ENCODE measurements at regions of chr14 and their contacts with region 1.

Region 1: GRCh38 chr14:96100161-96101029 is 61.2 kb downstream of the C14orf132 start:
- DNase-seq: peak; percentile 92
- ATAC-seq: peak; percentile 73
- H3K4me3 Mint-ChIP-seq: no peak overlapping the region
- H3K27ac Mint-ChIP-seq: no peak overlapping the region
- H3K4me1 Mint-ChIP-seq: peaks cover 14% of the 10 kb centered on the region
- H3K27me3 Mint-ChIP-seq: no peaks in the 10 kb centered on the region
- CTCF ChIP-seq: peak; percentile 65

Region 2: GRCh38 chr14:95683793-95684192 is 416.6 kb before region 1 on chr14:
- CTCF ChIA-PET with region 1: interaction called, 11 read pairs
- POLR2A ChIA-PET with region 1: no interaction called
- DNase-seq: peak; percentile 75
- ATAC-seq: peak; percentile 83
- H3K4me3 Mint-ChIP-seq: no peak overlapping the region
- H3K27ac Mint-ChIP-seq: no peak overlapping the region
- H3K4me1 Mint-ChIP-seq: peaks cover 35% of the 10 kb centered on the region
- H3K27me3 Mint-ChIP-seq: peaks cover 12% of the 10 kb centered on the region
- CTCF ChIP-seq: peak; percentile 67; the same call in 1 of the 2 replicates

Region 3: DNA sequence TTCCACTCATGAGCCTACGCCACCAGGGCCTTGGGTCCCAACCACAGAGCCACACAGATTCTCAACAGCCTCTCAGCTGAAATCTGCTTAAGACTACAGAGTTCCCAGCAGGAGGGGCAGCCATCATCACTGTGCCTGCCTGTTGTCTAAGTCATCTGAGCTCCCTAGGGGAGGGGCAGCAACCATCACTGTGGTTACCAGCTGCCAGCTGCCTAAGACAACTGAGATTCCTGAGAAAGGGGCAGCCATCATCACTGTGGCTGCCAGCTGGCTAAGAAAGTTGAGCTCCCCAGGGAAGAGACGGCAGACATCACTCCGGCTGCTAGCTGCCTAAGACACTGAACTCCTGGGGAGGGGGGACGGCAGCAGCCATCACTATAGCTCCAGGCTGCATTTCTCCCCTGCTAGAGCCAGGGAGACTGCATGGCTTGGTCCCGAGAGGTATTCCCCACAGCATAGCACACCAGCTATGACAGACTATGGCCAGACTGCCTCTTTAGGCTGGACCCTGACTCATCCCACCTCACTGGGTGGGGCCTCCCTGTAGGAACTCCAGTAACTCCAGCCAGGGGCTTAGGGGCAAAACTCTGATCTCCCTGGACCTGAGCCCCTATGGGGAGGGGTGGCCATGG is 98.4 kb before region 1 on chr14:
- CTCF ChIA-PET with region 1: interaction called, 41 read pairs
- POLR2A ChIA-PET with region 1: no interaction called
- DNase-seq: no peak
- ATAC-seq: peak; percentile 48; the same call in 1 of the 2 replicates
- H3K4me3 Mint-ChIP-seq: no peak overlapping the region
- H3K27ac Mint-ChIP-seq: no peak overlapping the region
- H3K4me1 Mint-ChIP-seq: 0 out of 2 replicates have a peak, but pooled peaks cover 4% of the 10 kb centered on the region
- H3K27me3 Mint-ChIP-seq: peaks cover 30% of the 10 kb centered on the region
- CTCF ChIP-seq: no peak

Region 4: GRCh38 chr14:96051642-96052540 is 48.5 kb before region 1 on chr14:
- CTCF ChIA-PET with region 1: interaction called, 61 read pairs
- POLR2A ChIA-PET with region 1: no interaction called
- DNase-seq: peak; percentile 52
- ATAC-seq: peak; percentile 86
- H3K4me3 Mint-ChIP-seq: no peak overlapping the region
- H3K27ac Mint-ChIP-seq: no peak overlapping the region; the same call in 1 of the 2 replicates
- H3K4me1 Mint-ChIP-seq: peaks cover 7% of the 10 kb centered on the region
- H3K27me3 Mint-ChIP-seq: no peaks in the 10 kb centered on the region
- CTCF ChIP-seq: peak; percentile 46; the same call in 1 of the 2 replicates

Region 5: GRCh38 chr14:96119947-96120346 is 19.6 kb after region 1 on chr14:
- CTCF ChIA-PET with region 1: interaction called, 14 read pairs
- POLR2A ChIA-PET with region 1: no interaction called
- DNase-seq: no peak
- ATAC-seq: no peak
- H3K4me3 Mint-ChIP-seq: no peak overlapping the region
- H3K27ac Mint-ChIP-seq: no peak overlapping the region
- H3K4me1 Mint-ChIP-seq: no peaks in the 10 kb centered on the region
- H3K27me3 Mint-ChIP-seq: peaks cover 4% of the 10 kb centered on the region
- CTCF ChIP-seq: no peak

Region 6: GRCh38 chr14:96264853-96265252 is 164.5 kb after region 1 on chr14:
- CTCF ChIA-PET with region 1: interaction called, 53 read pairs
- POLR2A ChIA-PET with region 1: no interaction called
- DNase-seq: peak; percentile 30
- ATAC-seq: peak; percentile 90
- H3K4me3 Mint-ChIP-seq: no peak overlapping the region
- H3K27ac Mint-ChIP-seq: no peak overlapping the region
- H3K4me1 Mint-ChIP-seq: no peaks in the 10 kb centered on the region
- H3K27me3 Mint-ChIP-seq: no peaks in the 10 kb centered on the region
- CTCF ChIP-seq: no peak

Region 7: DNA sequence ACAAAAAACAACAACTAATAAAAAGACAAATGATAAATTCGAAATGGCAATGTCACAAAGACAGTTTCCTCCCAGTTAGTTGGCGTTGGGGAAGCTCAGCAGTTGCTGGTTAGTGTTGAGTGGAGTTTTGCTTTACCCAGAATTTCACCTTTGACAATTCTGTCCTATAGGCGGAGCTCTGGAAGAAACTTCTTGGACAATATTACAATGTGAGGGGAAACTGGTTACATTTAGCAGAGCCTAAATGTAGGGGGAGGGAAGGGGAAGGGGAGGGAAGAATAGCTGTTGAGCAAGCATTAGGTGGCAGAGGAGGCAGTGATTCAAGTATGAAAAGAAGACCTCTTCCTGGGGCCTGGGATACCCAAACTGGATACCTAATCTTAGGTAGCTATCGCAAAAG is 207.0 kb after region 1 on chr14:
- CTCF ChIA-PET with region 1: interaction called, 14 read pairs
- POLR2A ChIA-PET with region 1: no interaction called
- DNase-seq: no peak
- ATAC-seq: peak; percentile 47
- H3K4me3 Mint-ChIP-seq: no peak overlapping the region
- H3K27ac Mint-ChIP-seq: no peak overlapping the region
- H3K4me1 Mint-ChIP-seq: no peaks in the 10 kb centered on the region; the same call in 1 of the 2 replicates
- H3K27me3 Mint-ChIP-seq: no peaks in the 10 kb centered on the region
- CTCF ChIP-seq: no peak